Head of caudate nucleus (tissue), 42 donors: ENCODE measurements at regions of chr5 and their contacts with region 1.

Region 1: DNA sequence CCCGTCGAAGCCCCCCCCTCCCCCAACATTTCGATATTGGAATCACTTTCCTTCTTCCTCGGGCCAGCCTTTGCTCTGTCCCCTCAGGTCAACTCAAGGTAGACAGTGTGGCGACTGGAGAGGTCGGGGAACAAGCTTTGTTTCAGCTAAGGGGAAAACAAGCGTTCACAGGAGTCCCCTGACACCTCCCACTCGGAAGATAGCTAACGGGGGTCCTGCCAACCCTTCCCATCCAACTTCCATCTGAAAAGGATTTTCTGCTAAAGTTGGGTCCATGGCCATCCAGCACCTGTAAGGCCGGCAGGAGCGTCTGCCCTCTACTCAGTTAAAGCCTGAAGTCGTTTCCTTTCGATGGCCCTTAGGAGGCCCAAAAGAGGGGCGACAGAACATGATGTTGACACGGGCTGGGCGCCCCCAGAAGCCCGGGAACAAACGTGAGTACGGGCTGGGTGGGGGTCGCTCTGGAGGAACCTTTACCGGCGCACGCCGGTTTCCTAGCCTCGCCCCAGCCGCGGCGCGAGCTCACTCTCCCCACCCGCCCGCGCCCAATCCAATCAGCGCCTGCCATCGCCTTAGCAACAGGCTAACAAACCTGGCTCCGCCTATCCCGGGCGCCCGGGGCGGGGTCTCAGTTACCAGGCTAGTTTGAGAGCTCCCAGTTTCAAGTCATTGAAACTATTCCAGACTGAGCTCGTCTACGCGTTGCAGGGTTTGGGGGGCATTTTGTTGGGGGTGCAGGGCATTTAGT is 2.5 kb downstream of the ARRDC3 start:
- DNase-seq: peak; percentile 97 to 100 (median 99)

Region 2: DNA sequence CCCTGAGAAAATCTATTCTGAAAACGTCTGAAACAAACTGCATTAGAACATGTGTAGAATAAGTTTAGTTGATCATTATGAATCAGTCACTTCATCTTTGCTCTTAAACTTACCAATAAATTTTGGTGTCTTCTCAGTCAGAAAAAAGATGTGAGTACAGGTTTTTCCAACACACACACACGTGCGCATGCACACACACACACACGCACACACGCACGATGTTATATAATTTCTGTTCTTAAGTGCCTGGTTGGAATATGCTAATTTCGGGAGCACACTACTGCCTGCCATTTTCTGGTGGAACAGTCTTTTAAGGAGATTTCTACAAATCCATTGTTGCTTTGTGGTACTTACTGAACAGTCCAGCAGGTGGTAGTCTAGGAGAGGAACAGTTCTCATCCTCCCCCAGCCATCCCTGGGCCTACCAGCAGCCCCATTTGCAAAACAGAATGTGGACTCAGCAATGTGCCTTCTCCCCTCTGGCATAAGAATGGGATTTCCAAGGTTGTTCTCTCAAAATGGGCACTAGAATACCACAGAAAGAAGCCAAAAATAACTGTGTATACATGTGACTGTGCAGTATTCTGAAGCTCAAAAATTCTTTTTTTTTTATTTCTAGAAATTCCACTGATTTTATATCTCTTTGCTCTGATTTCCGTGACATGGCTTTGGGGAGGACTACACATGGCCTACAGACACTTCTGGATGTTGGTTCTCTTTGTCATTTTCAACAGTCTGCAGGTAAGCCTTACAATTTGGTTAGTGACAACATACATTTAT is 278.9 kb before region 1 on chr5:
- intact Hi-C with region 1: loop called (anchors 5 kb)
- DNase-seq: peak; percentile 35 to 91 (median 73)

Region 3: GRCh38 chr5:91280362-91281269 is 100.0 kb before region 1 on chr5:
- intact Hi-C with region 1: loop called (anchors 2 kb)
- DNase-seq: peak; percentile 82 to 97 (median 94)

Region 4: DNA sequence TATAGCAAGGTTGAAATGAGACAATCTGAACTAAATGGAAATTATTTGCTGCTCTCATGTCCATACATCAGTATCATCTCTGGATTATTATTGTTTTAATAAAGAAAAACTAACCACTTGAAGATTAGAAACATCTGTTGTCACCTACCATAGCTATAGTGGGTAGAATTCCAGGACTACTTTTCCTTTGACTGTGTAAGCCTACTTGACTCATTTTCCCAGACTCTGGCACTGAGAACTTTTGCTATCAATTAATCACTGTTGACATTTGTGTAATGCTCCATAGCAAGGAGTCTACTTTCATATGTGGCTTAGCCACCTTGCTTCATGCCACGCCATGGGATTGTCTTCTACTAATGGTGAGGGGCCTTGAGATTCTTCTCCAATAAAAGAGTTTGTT is 62.4 kb after region 1 on chr5:
- intact Hi-C with region 1: no loop called
- DNase-seq: no peak